Dorsolateral prefrontal cortex (tissue), 120 donors: ENCODE measurements at regions of chr17 and their contacts with region 1.

Region 1: DNA sequence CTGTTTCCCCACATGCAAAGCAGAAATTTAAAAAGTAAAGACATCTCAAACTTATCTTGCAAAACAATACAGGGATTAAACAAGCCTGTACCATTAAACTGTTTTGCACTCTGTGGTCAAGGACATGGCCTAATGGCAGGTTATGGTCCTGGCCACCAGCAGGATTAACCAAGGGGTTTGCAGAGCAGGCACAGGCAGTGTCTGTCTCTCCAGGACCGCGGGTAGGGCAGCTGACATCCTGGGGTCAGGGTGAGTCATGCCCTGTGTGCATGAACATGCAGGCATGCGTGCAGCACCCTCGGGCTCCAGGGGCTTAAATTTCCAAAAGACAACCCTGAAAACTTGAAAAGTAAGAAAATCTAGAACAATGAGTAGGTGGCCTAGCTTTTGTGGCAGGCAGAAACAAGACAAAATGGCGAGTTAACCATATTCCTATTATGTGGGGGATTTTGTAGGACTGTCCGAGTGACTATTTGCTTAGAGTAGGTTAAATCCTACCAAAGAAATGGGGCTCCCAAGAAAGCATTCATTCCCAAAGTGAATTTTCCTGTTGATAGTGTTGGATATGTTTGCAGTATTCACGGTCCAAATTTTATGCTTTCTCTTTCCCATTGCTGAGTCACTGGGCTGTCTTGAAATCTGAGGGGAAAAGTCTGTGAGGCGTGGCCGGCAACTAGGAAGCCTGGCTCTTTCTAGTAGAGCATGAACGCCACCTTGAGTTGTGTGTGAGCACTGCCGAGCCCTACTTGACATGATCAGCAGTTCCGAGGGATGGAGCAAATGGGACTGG is 158.4 kb upstream of the FAM20A start:
- DNase-seq: peak; percentile 45 to 95 (median 87)
- H3K4me3 ChIP-seq: peak overlapping the region in 54 of 59 donors; percentile 4 to 64 (median 38)
- H3K27ac ChIP-seq: peak overlapping the region in 55 of 59 donors; percentile 3 to 88 (median 66)
- H3K27me3 ChIP-seq: no peaks in the 10 kb centered on the region
- CTCF ChIP-seq: peak; percentile 69 to 98 (median 89)

Region 2: DNA sequence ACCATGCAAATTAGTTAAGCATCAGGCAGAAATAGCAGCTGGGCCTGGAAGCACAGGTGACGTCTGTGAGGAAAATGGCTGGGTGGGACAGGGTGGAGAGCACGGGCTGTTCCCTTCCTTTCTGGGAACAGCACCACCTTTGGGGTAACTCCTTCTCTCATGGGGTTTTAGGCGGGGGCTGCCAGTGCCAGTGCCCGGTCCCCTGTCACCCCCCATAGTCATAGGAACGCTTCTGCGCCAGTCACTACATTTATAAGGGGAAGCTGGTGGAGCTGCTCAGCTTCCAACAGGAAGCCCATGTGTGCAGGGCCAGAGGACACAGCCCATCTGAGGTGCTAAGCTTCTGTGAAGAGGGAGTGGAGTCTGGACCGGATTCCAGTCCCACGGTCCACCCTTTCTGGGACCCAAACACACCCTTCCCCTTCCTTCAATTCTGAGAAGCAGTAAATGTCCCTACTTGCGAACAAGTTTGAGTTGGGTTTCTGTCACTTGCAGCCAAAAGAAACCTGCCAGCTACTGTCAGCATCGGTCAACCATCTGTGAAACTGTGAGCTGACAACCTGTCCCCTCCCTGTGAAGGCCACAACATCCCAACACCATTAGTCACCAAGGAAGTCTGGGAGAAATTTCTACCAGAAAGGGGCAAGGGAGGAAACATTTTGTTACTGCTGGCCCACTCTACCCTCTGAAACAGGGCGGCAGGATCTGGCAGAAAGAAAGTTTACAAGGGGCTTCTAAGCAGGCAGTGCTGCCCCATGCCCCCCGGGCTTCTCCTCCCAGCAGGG is 597.7 kb before region 1 on chr17:
- intact Hi-C with region 1: no loop called
- DNase-seq: no peak
- H3K4me3 ChIP-seq: no peak overlapping the region
- H3K27ac ChIP-seq: peak overlapping the region in 4 of 59 donors; percentile 6 to 31 (median 27)
- H3K27me3 ChIP-seq: no peaks in the 10 kb centered on the region
- CTCF ChIP-seq: no peak

Region 3: DNA sequence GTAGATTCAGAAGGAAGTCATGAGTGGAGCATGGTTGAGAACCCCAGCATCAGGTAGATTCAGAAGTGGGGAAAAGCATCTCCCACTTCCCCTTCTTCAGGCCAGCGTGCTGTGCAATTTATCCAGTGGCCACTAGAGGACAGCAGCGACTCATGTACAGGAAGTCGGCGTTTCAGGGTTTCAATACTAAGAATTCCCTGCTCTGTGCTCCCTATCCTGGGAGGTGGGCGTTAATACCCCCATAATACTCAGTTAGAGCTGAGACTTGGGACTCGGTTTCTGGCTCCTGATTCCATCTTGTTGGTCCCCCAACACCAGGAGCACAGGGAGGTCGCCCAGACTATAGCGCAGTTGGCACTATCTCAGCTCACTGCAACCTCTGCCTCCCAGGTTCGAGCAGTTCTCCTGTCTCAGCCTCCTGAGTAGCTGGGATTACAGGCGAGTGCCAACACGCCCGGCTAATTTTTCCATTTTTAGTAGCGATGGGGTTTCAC is 587.0 kb before region 1 on chr17:
- intact Hi-C with region 1: loop called in 1 of 2 experiments (anchors 10 kb)
- DNase-seq: peak in 9 of 10 donors; percentile 53 to 77 (median 70)
- H3K4me3 ChIP-seq: no peak overlapping the region
- H3K27ac ChIP-seq: no peak overlapping the region
- H3K27me3 ChIP-seq: no peaks in the 10 kb centered on the region
- CTCF ChIP-seq: peak; percentile 79 to 99 (median 94)

Region 4: DNA sequence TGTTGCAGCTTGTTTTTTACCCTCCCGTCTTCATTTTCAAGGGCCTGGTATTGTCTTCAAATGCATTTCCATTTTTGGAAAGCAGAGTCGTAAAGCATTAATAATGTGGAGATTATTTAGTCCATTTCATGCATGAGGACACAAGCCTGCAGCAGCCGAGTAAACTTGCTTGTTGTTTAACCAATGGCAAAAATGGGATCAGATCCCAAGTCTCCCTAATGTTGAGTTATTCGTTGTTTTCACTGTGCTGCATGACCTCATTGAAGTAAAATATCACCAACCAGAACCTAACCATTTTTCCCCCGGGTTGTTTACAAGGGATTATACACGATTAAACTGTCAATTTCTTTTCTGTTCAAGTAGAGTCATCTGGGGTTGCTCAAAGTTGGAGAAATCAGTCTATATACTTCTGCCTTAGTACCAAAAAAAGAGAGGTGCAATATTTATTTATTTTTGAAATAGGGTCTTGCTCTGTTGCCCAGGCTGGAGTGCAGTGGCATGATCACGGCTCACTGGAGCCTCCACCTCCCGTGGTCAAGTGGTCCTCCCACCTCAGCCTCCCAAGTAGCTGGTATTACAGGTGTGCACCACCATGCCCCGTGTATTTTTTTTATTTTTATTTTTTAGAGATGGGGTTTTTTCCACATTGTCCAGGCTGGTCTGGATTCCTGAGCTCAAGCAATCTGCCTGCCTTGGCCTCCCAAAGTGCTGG is 499.3 kb before region 1 on chr17:
- intact Hi-C with region 1: loop called in 1 of 2 experiments (anchors 5 kb)
- DNase-seq: peak in 1 of 10 donors; percentile 18
- H3K4me3 ChIP-seq: no peak overlapping the region
- H3K27ac ChIP-seq: peak overlapping the region in 12 of 59 donors; percentile 2 to 81 (median 54)
- H3K27me3 ChIP-seq: no peaks in the 10 kb centered on the region
- CTCF ChIP-seq: no peak

Region 5: GRCh38 chr17:68468334-68468733 is 291.2 kb before region 1 on chr17:
- intact Hi-C with region 1: loop called (anchors 5 kb)
- DNase-seq: peak in 1 of 10 donors; percentile 42
- H3K4me3 ChIP-seq: no peak overlapping the region
- H3K27ac ChIP-seq: peak overlapping the region in 15 of 59 donors; percentile 5 to 66 (median 48)
- H3K27me3 ChIP-seq: no peaks in the 10 kb centered on the region
- CTCF ChIP-seq: no peak

Region 6: DNA sequence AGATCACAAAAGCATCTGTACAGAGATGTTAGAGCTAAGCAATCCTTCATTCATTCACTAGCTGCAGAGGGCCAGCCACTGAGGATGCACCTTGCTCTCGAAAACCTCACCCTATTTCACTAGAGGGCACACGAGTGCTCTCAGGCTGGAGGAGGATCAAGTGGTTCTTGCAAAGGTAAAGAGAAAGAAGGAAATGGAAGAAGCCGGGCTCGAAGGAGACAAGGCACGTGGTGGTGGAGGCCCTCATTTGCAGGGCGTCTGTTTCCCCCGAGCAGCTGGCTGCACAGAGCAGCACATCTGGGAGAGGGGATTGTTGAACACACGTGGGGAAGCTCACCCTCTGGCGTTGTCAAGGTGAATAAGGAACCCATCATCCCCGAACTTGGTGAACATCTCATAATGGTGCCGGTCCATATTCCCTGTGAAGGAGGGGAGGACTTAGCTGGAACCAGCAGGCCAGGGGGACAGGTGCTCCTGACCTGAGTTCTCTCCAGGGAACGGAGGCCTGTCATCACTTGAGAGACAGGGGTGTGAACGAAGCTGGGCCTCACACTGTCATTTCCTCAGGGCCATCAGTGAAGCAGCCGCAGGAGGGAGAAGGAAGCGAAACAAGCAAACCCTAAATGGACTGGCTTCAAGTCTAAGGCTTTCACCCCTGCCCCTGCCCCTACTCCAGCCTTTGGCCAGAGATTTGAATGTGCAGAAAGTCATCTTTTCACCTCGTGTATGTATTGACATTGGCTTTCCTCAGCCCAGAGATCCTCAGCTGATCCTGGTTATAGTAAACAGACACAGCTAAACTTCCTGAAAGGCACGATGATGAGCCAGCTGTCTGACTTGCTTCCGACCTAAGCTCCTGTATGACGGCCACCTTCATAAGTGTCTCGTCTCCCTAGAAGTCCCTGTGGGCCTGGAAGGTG is 219.7 kb before region 1 on chr17:
- intact Hi-C with region 1: loop called (anchors 5 kb)
- DNase-seq: peak in 1 of 10 donors; percentile 17
- H3K4me3 ChIP-seq: no peak overlapping the region
- H3K27ac ChIP-seq: peak overlapping the region in 38 of 59 donors; percentile 1 to 77 (median 31)
- H3K27me3 ChIP-seq: no peaks in the 10 kb centered on the region
- CTCF ChIP-seq: peak in 37 of 56 donors; percentile 6 to 42 (median 22)

Region 7: GRCh38 chr17:70535986-70536385 is 1776.4 kb after region 1 on chr17:
- intact Hi-C with region 1: no loop called
- DNase-seq: no peak
- H3K4me3 ChIP-seq: no peak overlapping the region
- H3K27ac ChIP-seq: no peak overlapping the region
- H3K27me3 ChIP-seq: no peaks in the 10 kb centered on the region
- CTCF ChIP-seq: no peak